Activated naive CD4-positive, alpha-beta T cell treated with anti-CD3 and anti-CD28 coated beads for 36 hours (primary cell): ENCODE measurements at regions of chr11 and their contacts with region 1.

Region 1: GRCh38 chr11:121367001-121367843 is 74.7 kb downstream of the SC5D start:
- DNase-seq: peak; percentile 54
- H3K4me3 Mint-ChIP-seq: peak overlapping the region; percentile 54
- H3K27ac Mint-ChIP-seq: peak overlapping the region; percentile 48
- H3K4me1 Mint-ChIP-seq: peaks cover 42% of the 10 kb centered on the region
- H3K27me3 Mint-ChIP-seq: no peaks in the 10 kb centered on the region

Region 2: GRCh38 chr11:121328967-121329679 is 38.1 kb before region 1 on chr11:
- CTCF ChIA-PET with region 1: interaction called, 3 read pairs
- intact Hi-C with region 1: loop called (anchors 2 kb)
- DNase-seq: peak; percentile 30
- H3K4me3 Mint-ChIP-seq: no peak overlapping the region
- H3K27ac Mint-ChIP-seq: no peak overlapping the region
- H3K4me1 Mint-ChIP-seq: no peaks in the 10 kb centered on the region
- H3K27me3 Mint-ChIP-seq: no peaks in the 10 kb centered on the region